ENCODE measurements at regions of chr15 and their contacts with region 1.

Region 1: GRCh38 chr15:44663409-44664308 is at the start of gene SPG11:
- DNase-seq: peak; percentile 88 to 99 (median 96)

Region 2: GRCh38 chr15:44584162-44584749 is 79.4 kb before region 1 on chr15:
- intact Hi-C with region 1: no loop called
- DNase-seq: peak in 6 of 42 donors; percentile 10 to 44 (median 24)

Region 3: DNA sequence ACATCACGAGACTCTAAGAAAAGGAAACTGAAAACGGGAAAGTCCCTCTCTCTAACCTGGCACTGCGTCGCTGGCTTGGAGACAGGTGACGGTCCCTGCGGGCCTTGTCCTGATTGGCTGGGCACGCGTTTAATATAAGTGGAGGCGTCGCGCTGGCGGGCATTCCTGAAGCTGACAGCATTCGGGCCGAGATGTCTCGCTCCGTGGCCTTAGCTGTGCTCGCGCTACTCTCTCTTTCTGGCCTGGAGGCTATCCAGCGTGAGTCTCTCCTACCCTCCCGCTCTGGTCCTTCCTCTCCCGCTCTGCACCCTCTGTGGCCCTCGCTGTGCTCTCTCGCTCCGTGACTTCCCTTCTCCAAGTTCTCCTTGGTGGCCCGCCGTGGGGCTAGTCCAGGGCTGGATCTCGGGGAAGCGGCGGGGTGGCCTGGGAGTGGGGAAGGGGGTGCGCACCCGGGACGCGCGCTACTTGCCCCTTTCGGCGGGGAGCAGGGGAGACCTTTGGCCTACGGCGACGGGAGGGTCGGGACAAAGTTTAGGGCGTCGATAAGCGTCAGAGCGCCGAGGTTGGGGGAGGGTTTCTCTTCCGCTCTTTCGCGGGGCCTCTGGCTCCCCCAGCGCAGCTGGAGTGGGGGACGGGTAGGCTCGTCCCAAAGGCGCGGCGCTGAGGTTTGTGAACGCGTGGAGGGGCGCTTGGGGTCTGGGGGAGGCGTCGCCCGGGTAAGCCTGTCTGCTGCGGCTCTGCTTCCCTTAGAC is 47.9 kb after region 1 on chr15 and contains the start of gene B2M:
- intact Hi-C with region 1: loop called (anchors 5 kb)
- DNase-seq: peak; percentile 93 to 98 (median 96)

Region 4: DNA sequence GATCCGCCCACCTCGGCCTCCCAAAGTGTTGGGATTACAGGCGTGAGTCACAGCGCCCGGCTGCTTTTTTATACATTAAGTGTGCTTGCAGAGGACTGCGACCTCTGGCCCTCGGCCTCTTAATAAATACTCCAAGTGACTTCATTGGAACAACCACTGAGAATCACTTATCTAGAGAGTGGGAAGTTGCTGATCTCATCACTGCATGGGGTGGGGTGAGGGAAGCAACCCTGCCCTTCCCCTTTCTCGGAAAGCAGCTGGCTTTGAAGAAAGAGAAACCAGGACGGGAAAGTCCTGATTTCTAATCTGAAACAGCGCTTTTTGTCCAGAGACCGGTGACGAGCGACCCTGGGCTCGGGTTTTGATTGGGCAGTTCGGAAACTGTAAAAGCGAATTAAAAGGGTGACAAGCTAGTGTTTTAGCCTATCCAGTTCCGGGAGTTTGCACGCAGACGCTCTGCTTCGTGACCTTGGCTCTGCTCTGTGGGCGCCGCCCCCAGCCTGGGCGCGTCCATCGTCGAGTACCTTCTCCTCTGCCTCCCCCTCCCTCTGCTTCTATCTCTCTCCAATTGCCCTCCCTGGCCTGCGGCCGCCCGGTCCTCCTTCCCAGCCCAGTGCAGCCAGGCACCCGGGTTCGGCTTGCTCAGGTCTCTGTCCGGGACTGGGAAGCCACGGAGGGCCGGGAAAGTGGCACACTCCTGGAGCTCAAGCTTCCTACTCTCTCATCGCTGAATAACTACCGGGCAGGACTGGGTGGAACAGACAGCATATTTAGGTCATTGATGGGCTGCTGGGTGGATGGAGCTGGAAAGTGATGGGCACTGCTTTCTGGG is 65.1 kb after region 1 on chr15:
- intact Hi-C with region 1: loop called (anchors 5 kb)
- DNase-seq: peak; percentile 89 to 98 (median 96)

Region 5: DNA sequence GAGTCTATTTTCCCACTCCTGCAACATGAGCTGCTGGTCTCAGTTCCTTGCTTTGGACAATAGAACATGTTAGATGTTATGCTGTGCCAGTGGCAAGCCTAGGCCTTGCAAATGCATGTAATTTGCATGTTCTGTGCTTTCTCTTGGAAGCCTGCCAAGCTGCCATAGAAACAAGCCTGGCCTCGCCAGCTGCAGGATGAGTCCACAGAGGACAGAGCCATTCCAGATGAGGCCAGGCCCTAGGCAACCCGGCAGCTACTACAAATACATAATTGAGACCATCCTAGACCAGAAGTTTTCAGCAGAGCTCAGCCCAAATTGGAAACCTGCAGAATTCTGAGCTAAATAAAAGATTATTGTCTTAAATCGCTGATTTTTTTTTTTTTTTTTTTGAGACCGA is 112.3 kb after region 1 on chr15:
- intact Hi-C with region 1: no loop called
- DNase-seq: peak; percentile 8 to 86 (median 69)